H1 (cell line): ENCODE measurements at regions of chr9 and their contacts with region 1.

Region 1: DNA sequence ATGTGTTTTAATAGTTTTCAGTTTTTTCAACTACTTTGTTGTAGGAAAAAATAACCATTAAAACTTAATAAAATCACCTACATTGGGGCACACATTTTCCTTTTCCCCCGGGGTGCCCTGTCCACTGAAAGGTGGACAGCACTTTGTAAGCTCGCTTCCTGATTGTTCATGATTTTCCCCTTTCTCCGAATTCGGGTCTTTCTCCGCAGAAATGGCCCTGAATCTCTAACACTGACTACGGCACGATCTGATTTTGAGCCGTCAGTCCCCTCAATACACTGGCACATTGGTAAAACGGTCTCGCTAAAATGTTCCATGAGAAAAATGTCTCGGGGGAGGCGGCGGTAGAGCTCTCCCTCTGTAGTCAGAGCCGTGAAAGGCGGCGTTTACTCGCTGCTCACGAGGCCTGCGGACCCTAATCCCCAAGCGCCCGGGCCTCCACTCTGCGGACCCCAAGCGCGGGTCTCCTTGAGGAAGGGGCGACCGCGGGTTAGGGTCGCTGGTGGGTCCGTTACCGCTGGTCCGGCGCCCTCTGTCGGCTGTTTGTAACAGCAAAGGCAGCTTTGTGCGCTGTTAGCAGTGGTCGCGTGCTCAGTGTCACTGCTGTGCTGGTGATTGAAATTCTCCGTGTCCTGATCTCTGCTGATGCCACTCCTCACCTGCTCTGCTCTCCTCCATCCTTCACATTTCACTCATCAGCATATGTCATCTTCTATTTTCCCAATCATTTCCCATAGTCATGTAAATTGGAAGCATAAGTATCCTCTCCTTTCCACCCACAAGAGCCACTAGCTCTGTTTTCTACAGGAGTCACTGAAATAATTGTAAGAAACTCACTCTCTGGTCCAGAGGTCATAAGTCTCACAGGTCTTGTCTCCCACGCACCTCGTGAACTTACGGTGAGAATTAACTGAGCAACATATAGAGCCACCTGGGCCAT is 10.8 kb upstream of the IFNA2 start:
- DNase-seq: peak in 1 of 2 experiments; percentile 87
- H3K4me3 ChIP-seq: peak overlapping the region; percentile 23 to 57 (median 34); a peak in 6 of 8 replicates
- H3K27ac ChIP-seq: no peak overlapping the region
- H3K4me1 ChIP-seq: no peaks in the 10 kb centered on the region
- H3K27me3 ChIP-seq: peaks cover 0 to 8% (median 4%) of the 10 kb centered on the region in 4 experiments; a peak in 3 of 7 replicates
- CTCF ChIP-seq: peak; percentile 88 to 98 (median 93)
- EP300 ChIP-seq: no peak
- POLR2A ChIP-seq: no peak
- RAD21 ChIP-seq: peak; percentile 61 to 72

Region 2: GRCh38 chr9:21039302-21039701 is 356.7 kb before region 1 on chr9:
- CTCF ChIA-PET with region 1: no interaction called
- POLR2A ChIA-PET with region 1: no interaction called
- DNase-seq: no peak
- H3K4me3 ChIP-seq: no peak overlapping the region
- H3K27ac ChIP-seq: no peak overlapping the region
- H3K4me1 ChIP-seq: peaks cover 0 to 2% (median 0%) of the 10 kb centered on the region in 4 experiments; a peak in 1 of 7 replicates
- H3K27me3 ChIP-seq: no peaks in the 10 kb centered on the region; a peak in 2 of 7 replicates
- CTCF ChIP-seq: no peak
- EP300 ChIP-seq: no peak
- POLR2A ChIP-seq: no peak
- RAD21 ChIP-seq: no peak

Region 3: GRCh38 chr9:21205204-21205603 is 190.8 kb before region 1 on chr9:
- CTCF ChIA-PET with region 1: no interaction called
- POLR2A ChIA-PET with region 1: no interaction called
- DNase-seq: no peak
- H3K4me3 ChIP-seq: no peak overlapping the region
- H3K27ac ChIP-seq: no peak overlapping the region
- H3K4me1 ChIP-seq: no peaks in the 10 kb centered on the region
- H3K27me3 ChIP-seq: no peaks in the 10 kb centered on the region
- CTCF ChIP-seq: no peak
- EP300 ChIP-seq: no peak
- POLR2A ChIP-seq: no peak
- RAD21 ChIP-seq: no peak

Region 4: DNA sequence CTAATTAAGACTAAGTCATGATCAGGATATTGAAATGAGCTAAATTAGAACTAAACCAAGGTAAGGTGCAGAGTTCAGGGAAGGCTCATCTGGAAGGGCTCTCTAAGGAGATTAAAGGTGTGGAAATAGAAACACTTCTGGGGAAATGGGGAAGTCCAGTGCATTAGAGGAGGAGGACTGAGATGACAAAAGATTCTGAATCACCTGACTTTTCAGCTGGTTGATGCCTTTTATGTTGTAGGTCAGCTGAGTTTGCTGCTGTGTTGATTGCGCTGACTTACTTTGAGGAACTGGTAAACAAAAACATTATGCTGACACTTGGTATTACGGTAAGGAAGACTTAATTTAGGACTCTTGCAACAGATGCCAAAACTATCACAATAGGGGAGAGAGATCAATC is 114.8 kb before region 1 on chr9:
- CTCF ChIA-PET with region 1: no interaction called
- POLR2A ChIA-PET with region 1: no interaction called
- DNase-seq: no peak
- H3K4me3 ChIP-seq: no peak overlapping the region
- H3K27ac ChIP-seq: no peak overlapping the region
- H3K4me1 ChIP-seq: no peaks in the 10 kb centered on the region
- H3K27me3 ChIP-seq: no peaks in the 10 kb centered on the region; a peak in 1 of 7 replicates
- CTCF ChIP-seq: no peak
- EP300 ChIP-seq: no peak
- POLR2A ChIP-seq: no peak
- RAD21 ChIP-seq: no peak

Region 5: DNA sequence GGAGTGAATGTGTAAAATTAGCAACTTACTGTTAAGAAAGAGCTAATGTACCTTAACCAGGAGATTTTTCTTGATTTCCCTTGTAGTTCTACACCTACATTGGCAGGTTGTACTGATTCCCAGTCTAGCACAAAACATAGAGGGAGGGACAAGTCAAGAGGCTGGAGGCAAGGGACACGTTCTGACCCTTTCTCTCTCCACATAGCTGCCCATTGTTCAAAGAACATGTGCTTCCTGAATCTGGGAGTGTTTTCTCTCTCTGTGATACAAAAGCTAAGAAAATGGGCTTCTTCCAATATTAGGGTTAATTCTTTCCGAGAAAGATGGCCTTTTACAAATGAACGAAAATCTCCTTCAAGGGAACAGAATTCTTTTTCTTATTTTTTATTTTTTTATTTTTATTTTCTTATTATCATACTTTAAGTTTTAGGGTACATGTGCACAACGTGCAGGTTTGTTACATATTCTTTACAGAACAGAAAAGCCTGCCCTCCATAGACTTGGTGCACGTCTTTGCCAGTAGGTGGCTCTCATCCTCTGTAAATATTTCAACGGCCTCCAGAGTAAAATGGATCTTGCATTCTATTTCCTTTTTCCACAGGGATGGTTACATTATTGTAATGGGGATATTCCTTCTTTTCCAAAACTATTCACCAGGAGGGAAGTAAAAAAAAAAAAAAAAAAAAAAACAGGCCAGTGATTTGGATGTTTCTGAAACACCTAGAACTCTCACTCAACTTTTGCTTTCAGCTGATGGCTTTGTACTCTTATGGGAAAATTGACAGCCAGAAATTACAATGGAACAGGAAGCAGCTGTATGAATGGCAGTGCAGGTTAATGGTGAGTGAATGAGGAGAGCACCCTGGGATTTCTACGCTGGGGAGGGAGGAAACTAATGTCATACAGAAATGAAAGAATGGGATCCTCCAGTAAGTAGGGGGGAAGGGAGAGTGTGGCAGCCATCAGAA is 77.8 kb before region 1 on chr9:
- CTCF ChIA-PET with region 1: interaction called, 20 read pairs
- POLR2A ChIA-PET with region 1: no interaction called
- DNase-seq: no peak
- H3K4me3 ChIP-seq: no peak overlapping the region
- H3K27ac ChIP-seq: no peak overlapping the region
- H3K4me1 ChIP-seq: no peaks in the 10 kb centered on the region
- H3K27me3 ChIP-seq: no peaks in the 10 kb centered on the region
- CTCF ChIP-seq: peak in 2 of 3 experiments; percentile 60 to 64; a peak in 3 of 4 replicates
- EP300 ChIP-seq: no peak
- POLR2A ChIP-seq: no peak
- RAD21 ChIP-seq: peak; percentile 65 to 75

Region 6: DNA sequence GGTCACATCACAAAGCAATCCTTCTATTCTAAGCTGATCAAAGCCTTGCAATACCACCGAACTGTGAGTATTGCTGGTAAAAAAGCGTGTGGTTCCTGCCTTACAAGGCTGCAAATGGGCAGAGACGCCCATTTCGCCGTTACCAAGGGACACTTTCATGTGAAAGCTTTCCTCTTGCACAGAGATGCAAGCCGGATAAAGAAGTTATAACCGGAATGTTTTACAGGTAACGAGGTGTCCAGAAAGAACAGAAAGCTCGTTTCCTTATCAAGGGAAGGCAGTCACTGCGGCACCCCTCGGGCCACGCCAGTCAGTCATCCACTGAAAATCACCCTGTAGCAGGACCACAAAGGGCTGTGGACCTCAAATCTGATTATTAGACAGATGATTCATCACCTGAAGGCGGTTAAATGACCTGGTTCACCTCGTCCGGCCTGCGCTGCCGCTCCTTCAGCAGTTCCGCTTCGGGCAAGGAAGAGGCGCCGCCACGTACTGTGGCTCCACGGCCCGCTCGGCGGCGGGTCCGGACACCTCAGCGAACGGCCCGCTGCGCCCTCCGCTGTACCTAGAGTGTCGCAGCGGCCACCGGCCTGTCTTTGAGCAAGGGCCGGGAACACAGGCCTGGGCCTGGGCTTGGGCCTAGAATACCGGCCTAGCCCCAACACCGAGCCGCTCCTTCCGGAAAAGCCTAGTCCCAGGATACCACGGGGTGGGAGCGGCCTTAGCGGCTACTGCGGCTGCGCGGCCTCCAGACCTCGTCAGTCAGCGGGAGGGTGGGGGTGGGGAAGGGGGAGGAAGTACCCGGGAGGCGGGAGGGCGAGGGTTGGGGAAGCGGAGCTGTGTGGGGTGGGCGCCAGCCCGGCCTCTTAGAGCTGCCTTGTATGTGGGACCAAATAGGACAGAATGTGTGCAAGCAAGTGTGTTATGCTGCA is 61.1 kb before region 1 on chr9 and contains the start of gene KLHL9:
- CTCF ChIA-PET with region 1: interaction called, 79 read pairs
- POLR2A ChIA-PET with region 1: interaction called, 3 read pairs
- DNase-seq: peak; percentile 63 to 88
- H3K4me3 ChIP-seq: peak within 1 kb of the TSS; percentile 76 to 100 (median 90)
- H3K27ac ChIP-seq: peak within 1 kb of the TSS; percentile 81
- H3K4me1 ChIP-seq: peaks cover 0 to 5% (median 0%) of the 10 kb centered on the region in 4 experiments; a peak in 2 of 7 replicates
- H3K27me3 ChIP-seq: no peaks in the 10 kb centered on the region
- CTCF ChIP-seq: no peak
- EP300 ChIP-seq: no peak
- POLR2A ChIP-seq: peak in 1 of 2 experiments; percentile 79; a peak in 2 of 3 replicates
- RAD21 ChIP-seq: no peak
- total RNA-seq, gene KLHL9: 14.7 and 15.7 TPM in 2 replicates

Region 7: DNA sequence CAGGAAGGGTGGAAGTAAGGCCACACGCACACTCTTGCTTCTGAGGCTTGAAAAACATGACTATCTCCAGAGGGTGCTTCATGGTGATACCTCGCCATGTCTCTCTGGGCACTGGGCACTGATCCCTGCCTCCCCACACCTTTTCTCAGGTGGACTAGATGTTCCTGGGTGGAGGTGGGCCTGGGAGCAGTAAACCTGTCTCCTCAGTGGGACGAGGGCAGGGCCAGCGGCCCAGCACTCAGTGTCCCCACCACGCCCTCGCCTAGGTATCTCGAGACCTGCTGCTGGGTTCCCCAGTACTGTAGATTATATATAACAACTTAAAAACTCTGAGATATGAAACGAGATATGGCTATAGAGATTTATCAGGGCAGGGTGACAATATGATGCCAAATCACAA is 33.8 kb before region 1 on chr9:
- CTCF ChIA-PET with region 1: interaction called, 14 read pairs
- POLR2A ChIA-PET with region 1: no interaction called
- DNase-seq: no peak
- H3K4me3 ChIP-seq: no peak overlapping the region
- H3K27ac ChIP-seq: no peak overlapping the region
- H3K4me1 ChIP-seq: no peaks in the 10 kb centered on the region
- H3K27me3 ChIP-seq: no peaks in the 10 kb centered on the region
- CTCF ChIP-seq: no peak
- EP300 ChIP-seq: no peak
- POLR2A ChIP-seq: no peak
- RAD21 ChIP-seq: no peak

Region 8: DNA sequence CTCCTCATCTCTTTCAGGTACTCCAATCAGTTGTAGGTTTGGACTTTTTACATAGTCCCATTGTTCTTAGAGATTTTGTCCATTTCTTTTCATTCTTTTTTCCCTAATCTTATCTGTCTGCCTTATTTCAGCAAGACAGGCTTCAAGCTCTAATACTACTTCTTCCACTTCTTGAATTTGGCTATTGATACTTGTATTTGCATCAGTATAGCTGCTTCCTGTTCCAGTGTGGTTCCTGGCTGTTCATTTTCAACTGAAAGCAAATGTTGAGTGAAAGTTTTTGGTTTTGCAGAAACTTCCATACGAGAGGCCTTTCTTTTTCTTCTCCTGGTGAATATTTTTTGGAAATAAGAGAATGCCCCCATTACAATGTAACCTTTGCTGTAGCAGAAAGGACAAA is 32.2 kb after region 1 on chr9:
- CTCF ChIA-PET with region 1: interaction called, 15 read pairs
- POLR2A ChIA-PET with region 1: no interaction called
- DNase-seq: no peak
- H3K4me3 ChIP-seq: no peak overlapping the region
- H3K27ac ChIP-seq: no peak overlapping the region
- H3K4me1 ChIP-seq: peaks cover 0 to 8% (median 0%) of the 10 kb centered on the region in 4 experiments; a peak in 1 of 7 replicates
- H3K27me3 ChIP-seq: no peaks in the 10 kb centered on the region
- CTCF ChIP-seq: no peak
- EP300 ChIP-seq: no peak
- POLR2A ChIP-seq: no peak
- RAD21 ChIP-seq: no peak